ENCODE measurements at regions of chr1 and their contacts with region 1.

Region 1: DNA sequence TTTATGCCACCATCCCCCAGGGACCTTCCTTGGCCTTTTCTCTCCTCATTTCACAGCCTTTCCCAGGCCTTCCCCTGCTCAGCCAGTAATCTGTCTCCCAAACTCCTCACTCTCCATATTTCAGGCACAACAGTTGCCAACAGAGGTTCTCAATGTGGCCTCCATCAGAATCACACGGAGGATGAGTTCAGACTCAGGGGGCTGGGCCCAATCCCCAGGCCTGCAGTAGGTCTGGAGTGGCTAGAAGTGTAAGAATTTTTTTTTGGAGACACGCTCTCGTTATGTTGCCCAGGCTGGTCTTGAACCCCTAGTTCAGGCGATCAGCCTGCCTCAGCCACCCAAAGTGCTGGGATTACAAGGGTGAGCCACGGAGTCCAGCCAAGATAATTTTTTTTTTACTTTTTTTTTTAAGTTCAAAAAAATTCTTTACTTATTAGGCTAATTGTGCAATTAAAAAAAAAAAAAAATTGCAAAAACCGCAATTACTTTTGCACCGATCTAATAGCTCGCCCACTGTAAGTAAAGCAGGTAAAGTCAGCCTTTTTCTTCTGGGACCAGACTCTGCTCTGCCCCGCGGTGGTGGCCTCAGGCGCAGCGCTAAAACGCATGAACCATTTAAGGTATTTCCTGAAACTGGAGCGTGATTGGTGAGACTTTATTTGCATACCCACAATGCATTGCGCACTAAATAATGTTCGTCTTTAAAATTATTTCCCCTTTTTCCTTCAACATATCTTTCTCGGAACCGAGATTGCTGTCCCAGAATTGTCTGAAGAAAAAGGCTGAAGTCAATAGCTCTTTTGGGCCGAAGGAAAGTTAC is 18.7 kb downstream of the KIAA2013 start:
- DNase-seq: peak; percentile 93
- ATAC-seq: peak; percentile 63
- H3K4me3 ChIP-seq: peak overlapping the region in 1 of 3 experiments; percentile 76; a peak in 3 of 6 replicates
- H3K27ac ChIP-seq: peak overlapping the region; percentile 100
- H3K4me1 ChIP-seq: peaks cover 40% of the 10 kb centered on the region
- H3K27me3 ChIP-seq: peaks cover 0 to 2% of the 10 kb centered on the region in 2 experiments; a peak in 2 of 5 replicates
- CTCF ChIP-seq: peak; percentile 84
- EP300 ChIP-seq: no peak
- POLR2A ChIP-seq: no peak
- RAD21 ChIP-seq: peak; percentile 34; the same call in 1 of the 2 replicates

Region 2: DNA sequence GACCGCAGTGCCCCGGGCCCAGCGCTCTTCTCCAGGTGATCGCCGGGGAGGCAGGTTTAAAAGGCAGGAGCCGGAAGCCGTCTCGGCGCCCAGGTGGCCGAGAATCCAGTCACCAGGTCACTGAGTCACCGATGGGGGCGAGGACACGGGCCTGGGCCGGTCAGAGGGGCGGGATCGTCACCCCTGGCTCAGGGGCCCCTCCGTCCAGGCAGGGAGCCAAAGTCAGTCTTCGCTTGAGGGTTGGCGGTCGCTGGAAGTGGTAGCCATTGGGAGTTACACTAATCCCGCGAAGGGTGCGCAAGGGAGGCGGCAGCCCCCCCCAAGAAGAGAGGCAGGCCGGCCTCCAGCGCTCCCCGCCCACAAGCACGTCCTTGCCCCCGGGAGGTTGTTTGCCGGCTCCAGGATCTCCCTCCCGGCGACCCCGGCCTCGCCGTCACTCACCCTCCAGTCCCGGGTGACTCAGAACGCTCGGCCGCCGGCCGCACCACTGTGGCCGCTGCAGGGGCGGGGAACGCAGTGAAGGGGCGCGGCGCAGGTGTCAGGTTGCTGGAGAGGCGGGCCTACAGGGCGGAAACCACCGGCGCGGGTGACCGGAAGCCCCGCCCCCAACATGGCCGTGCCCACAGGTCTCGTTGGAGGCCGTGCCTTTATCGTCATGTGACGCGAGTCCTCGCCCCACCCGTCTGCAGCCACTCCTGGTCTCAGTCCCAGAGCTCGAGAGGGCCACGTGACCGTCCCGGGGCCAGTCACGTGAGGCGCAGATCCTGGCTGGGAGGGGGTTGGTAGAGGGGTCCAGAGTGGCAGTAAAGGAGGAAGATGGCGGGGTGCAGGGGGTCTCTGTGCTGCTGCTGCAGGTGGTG is 101.8 kb before region 1 on chr1 and contains the starts of genes CLCN6 and MTHFR:
- CTCF ChIA-PET with region 1: no interaction called
- POLR2A ChIA-PET with region 1: interaction called, 31 read pairs
- in situ Hi-C with region 1: no loop called
- intact Hi-C with region 1: no loop called
- DNase-seq: peak; percentile 98
- ATAC-seq: peak; percentile 92
- H3K4me3 ChIP-seq: peak within 1 kb of the TSS; percentile 86 to 88 (median 87)
- H3K27ac ChIP-seq: peak within 1 kb of the TSS; percentile 94
- H3K4me1 ChIP-seq: peaks cover 69% of the 10 kb centered on the region
- H3K27me3 ChIP-seq: no peaks in the 10 kb centered on the region; a peak in 1 of 5 replicates
- CTCF ChIP-seq: peak; percentile 18; the same call in 1 of the 2 replicates
- EP300 ChIP-seq: peak in 1 of 2 experiments; percentile 48; a peak in 1 of 4 replicates
- POLR2A ChIP-seq: peak; percentile 70 to 82
- RAD21 ChIP-seq: peak; percentile 55; the same call in 1 of the 2 replicates
- total RNA-seq, gene CLCN6: 10.1 and 19.3 TPM in 2 replicates
- total RNA-seq, gene MTHFR: 5.0 and 8.2 TPM in 2 replicates

Region 3: DNA sequence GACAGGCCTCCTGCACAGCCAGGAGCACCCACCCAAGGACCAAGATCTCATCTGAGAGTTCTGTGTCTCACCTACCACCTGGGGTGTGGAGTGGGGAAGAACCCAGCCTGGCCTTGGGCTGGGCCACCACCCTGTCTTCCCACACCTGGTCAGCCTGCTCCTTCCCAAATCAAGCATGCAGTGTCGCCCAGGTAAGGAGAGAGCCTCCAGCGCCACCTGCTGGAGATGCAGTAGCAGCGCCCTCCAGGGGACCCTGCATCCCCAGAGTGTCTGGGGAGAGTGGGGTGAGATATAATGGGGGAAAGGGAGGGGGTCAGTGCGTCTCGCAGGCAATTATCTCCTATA is 13.6 kb before region 1 on chr1:
- CTCF ChIA-PET with region 1: no interaction called
- POLR2A ChIA-PET with region 1: interaction called, 20 read pairs
- in situ Hi-C with region 1: no loop called
- intact Hi-C with region 1: no loop called
- DNase-seq: peak; percentile 49
- ATAC-seq: peak; percentile 86
- H3K4me3 ChIP-seq: no peak overlapping the region
- H3K27ac ChIP-seq: no peak overlapping the region
- H3K4me1 ChIP-seq: peaks cover 48% of the 10 kb centered on the region
- H3K27me3 ChIP-seq: peaks cover 0 to 4% of the 10 kb centered on the region in 2 experiments; a peak in 2 of 5 replicates
- CTCF ChIP-seq: peak; percentile 96
- EP300 ChIP-seq: no peak
- POLR2A ChIP-seq: peak in 1 of 2 experiments; percentile 27; a peak in 1 of 4 replicates
- RAD21 ChIP-seq: peak; percentile 92

Region 4: DNA sequence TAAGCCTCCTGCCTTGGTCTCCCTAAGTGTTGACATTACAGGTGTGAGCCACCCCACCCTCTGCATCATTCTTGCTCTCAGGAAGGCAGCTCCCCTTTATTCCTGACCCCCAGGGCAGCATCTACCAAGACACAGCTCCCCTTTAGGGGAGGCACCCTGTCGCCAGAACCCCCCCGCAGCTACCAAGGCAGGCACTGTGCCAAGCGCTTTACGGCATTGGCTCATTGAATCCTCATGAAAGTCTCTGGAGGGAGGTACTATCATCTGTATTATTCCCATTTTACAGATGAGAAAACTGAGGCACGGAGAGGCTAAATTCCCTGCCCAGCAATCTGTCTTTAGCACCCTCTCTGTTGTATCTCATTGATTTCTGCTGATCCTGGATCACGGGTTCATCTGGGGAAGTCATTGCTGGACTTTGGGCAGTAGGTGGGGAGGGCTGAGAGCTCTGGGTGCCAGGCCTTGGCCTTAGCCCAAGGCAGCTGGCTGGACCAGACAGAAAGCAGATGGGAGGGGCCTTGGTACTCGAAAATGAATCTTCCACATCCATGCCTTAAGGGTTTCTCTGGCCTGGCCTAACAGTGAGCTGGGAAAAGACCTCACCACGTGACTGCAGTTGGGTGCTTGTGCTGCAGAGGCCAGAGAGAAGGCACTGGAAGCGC is 32.9 kb after region 1 on chr1:
- CTCF ChIA-PET with region 1: no interaction called
- POLR2A ChIA-PET with region 1: interaction called, 16 read pairs
- in situ Hi-C with region 1: no loop called
- intact Hi-C with region 1: no loop called
- DNase-seq: peak; percentile 70
- ATAC-seq: peak; percentile 82
- H3K4me3 ChIP-seq: no peak overlapping the region
- H3K27ac ChIP-seq: no peak overlapping the region
- H3K4me1 ChIP-seq: peaks cover 55% of the 10 kb centered on the region
- H3K27me3 ChIP-seq: no peaks in the 10 kb centered on the region
- CTCF ChIP-seq: no peak
- EP300 ChIP-seq: 0 out of 4 replicates have a peak, but pooled peaks of 1 of the 2 experiments have one; percentile 38
- POLR2A ChIP-seq: no peak
- RAD21 ChIP-seq: no peak; the same call in 1 of the 2 replicates

Region 5: DNA sequence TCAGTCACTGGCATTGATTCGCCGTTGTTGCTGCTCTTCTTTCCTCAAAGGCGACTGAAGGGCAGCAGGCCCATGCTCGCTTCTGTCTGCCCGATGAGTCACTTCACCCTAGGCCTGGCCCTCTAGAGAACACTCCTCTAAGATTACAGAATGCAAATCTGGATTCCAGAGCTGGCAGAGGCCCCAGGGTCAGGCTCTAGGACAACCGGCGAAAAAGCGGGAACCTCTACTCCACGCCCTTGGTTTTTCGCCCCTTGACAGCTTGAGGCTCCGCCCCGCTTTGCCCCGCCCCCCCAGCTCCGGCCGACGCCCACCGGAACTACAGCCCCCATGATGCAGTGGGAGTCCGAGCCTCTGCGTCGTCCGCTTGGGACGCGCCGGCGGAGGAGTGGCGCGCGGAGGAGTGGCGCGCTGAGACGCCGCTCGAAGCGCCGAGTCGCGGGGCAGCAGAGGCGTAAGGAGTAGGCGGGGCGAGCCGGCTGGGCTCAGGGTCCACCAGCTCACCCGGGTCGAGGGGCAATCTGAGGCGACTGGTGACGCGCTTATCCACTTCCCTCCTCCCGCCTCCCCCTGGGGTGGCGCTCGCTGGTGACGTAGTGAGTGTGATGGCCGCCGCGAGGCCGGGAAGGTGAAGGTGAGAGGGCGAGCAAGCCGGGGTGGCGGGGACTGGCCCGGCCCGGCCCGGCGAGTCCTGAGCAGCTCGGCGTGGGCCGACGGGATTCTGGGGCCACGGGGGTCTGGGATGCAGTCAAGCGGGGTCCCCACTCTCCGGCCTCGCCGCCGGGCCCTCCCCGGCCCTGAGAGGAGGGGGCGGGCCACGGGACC is 72.6 kb after region 1 on chr1 and contains the start of gene MFN2:
- CTCF ChIA-PET with region 1: no interaction called
- POLR2A ChIA-PET with region 1: interaction called, 107 read pairs
- in situ Hi-C with region 1: no loop called
- intact Hi-C with region 1: no loop called
- DNase-seq: peak; percentile 95
- ATAC-seq: peak; percentile 90
- H3K4me3 ChIP-seq: peak within 1 kb of the TSS; percentile 91 to 98 (median 97)
- H3K27ac ChIP-seq: peak within 1 kb of the TSS; percentile 81
- H3K4me1 ChIP-seq: peaks cover 57% of the 10 kb centered on the region
- H3K27me3 ChIP-seq: peaks cover 0 to 3% of the 10 kb centered on the region in 2 experiments; a peak in 1 of 5 replicates
- CTCF ChIP-seq: 0 out of 2 replicates have a peak, but pooled peaks have one; percentile 19
- EP300 ChIP-seq: 0 out of 4 replicates have a peak, but pooled peaks of 1 of the 2 experiments have one; percentile 7
- POLR2A ChIP-seq: peak; percentile 67 to 77
- RAD21 ChIP-seq: no peak; the same call in 1 of the 2 replicates
- total RNA-seq, gene MFN2: 60.9 and 76.3 TPM in 2 replicates

Region 6: GRCh38 chr1:12019858-12020509 is 112.5 kb after region 1 on chr1:
- CTCF ChIA-PET with region 1: no interaction called
- POLR2A ChIA-PET with region 1: interaction called, 16 read pairs
- in situ Hi-C with region 1: no loop called
- intact Hi-C with region 1: no loop called
- DNase-seq: no peak
- ATAC-seq: peak; percentile 44; the same call in 2 of the 3 replicates
- H3K4me3 ChIP-seq: peak overlapping the region; percentile 68 to 85 (median 82)
- H3K27ac ChIP-seq: peak overlapping the region; percentile 91
- H3K4me1 ChIP-seq: peaks cover 9% of the 10 kb centered on the region
- H3K27me3 ChIP-seq: no peaks in the 10 kb centered on the region
- CTCF ChIP-seq: no peak
- EP300 ChIP-seq: no peak
- POLR2A ChIP-seq: no peak
- RAD21 ChIP-seq: no peak